ENCODE measurements at regions of chr3 and their contacts with region 1.

Region 1: GRCh38 chr3:44729384-44729910 is at the start of gene ZNF501:
- DNase-seq: peak; percentile 94
- H3K4me3 Mint-ChIP-seq: peak within 1 kb of the TSS; percentile 90
- H3K27ac Mint-ChIP-seq: peak within 1 kb of the TSS; percentile 73
- H3K4me1 Mint-ChIP-seq: peaks cover 9% of the 10 kb centered on the region
- H3K27me3 Mint-ChIP-seq: no peaks in the 10 kb centered on the region
- total RNA-seq, gene ZNF501: 1.6 to 2.7 TPM

Region 2: DNA sequence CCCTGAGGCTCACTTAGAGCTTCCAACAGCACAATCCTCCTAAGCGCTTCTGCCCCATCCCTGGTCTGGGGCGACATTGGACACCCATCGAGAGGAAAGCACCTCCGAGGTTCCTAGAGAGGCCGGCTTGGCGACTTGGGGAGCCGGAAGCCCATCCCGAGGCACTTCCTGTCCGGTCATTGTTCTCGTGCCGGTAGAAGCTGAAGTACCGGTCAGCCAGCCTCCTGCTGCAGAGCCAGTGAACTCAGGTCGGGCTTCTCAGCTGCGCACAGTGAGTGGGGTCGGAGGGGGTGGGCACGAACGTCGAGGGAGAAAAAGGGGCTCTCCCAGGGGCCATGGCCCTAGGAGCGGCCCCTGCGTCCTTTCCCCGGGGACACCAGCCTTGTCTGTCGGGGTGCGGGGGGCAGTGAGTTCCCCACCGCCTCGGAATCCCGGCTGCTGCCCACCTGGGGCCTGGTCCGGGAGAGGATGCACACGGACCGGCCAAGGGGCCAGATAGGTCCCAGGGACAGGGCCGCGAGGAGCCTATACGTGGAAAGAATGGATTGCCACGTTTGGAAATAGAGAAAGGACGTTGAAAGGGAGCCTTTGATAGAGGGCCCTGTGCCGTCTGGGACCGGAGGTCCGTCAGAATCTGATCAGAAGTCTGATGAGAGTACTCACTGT is 80.8 kb before region 1 on chr3 and contains the start of gene ZNF35:
- CTCF ChIA-PET with region 1: no interaction called
- intact Hi-C with region 1: loop called (anchors 2 kb)
- DNase-seq: peak; percentile 49
- H3K4me3 Mint-ChIP-seq: peak within 1 kb of the TSS; percentile 78
- H3K27ac Mint-ChIP-seq: no peak within 1 kb of the TSS
- H3K4me1 Mint-ChIP-seq: peaks cover 10% of the 10 kb centered on the region
- H3K27me3 Mint-ChIP-seq: no peaks in the 10 kb centered on the region
- total RNA-seq, gene ZNF35: 1.1 to 1.9 TPM

Measured in activated naive CD4-positive, alpha-beta T cell treated with anti-CD3 and anti-CD28 coated beads for 36 hours (primary cell).